ENCODE measurements at regions of chr1 and their contacts with region 1.

Region 1: GRCh38 chr1:1122078-1122811 is 6.4 kb upstream of the C1orf159 start:
- DNase-seq: peak; percentile 96
- H3K4me3 ChIP-seq: peak overlapping the region in 5 of 8 donors; percentile 10 to 54 (median 25)
- H3K27ac ChIP-seq: peak overlapping the region in 2 of 8 donors; percentile 38 to 47
- H3K4me1 ChIP-seq: peaks cover 4 to 27% (median 15%) of the 10 kb centered on the region in 6 donors
- H3K27me3 ChIP-seq: peaks cover 0 to 53% (median 11%) of the 10 kb centered on the region in 7 donors
- CTCF ChIP-seq: peak; percentile 86 to 97 (median 94)
- POLR2A ChIP-seq: no peak

Region 2: GRCh38 chr1:1058921-1059493 is 63.2 kb before region 1 on chr1:
- intact Hi-C with region 1: no loop called
- DNase-seq: peak; percentile 85
- H3K4me3 ChIP-seq: peak overlapping the region; percentile 43 to 87 (median 62)
- H3K27ac ChIP-seq: peak overlapping the region in 1 of 8 donors; percentile 29
- H3K4me1 ChIP-seq: peaks cover 12 to 45% (median 30%) of the 10 kb centered on the region in 6 donors
- H3K27me3 ChIP-seq: peaks cover 0 to 74% (median 64%) of the 10 kb centered on the region in 7 donors
- CTCF ChIP-seq: peak in 4 of 11 experiments; percentile 38 to 44 (median 41)
- POLR2A ChIP-seq: no peak

Region 3: DNA sequence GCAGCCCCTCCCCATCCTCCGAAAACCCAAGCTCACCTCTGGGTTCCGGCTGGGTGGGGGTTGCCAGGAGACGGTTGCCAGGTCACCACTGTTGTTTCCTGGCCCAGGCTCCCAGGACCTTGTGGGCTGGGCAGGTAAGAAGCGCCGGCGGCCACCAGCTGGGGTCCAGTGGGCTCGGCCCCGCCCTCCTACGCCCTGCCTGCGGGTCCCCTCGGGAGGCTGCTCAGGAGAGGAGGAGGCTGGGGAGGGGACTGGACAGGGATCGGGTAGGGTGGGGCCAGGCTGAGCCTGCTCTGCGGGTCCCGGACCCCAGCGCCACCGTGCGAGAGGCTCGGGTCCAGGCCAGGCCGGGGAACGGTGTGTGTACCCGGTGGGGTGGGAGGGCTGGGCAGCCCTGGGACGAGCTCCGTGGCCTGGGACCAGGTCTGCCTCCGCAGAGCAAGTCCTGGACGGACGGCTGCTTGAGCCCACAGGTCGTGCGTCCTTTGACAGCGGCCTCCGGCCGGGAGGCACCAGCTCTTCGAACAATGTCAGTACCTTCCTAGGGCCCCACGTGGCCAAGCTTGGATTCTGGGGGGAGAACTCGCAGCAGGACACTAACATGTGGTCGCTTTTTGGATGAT is 51.7 kb after region 1 on chr1 and contains the start of gene TTLL10:
- intact Hi-C with region 1: no loop called
- DNase-seq: peak; percentile 82
- H3K4me3 ChIP-seq: peak within 1 kb of the TSS in 1 of 8 donors; percentile 19
- H3K27ac ChIP-seq: no peak within 1 kb of the TSS
- H3K4me1 ChIP-seq: peaks cover 0 to 56% (median 38%) of the 10 kb centered on the region in 6 donors
- H3K27me3 ChIP-seq: peaks cover 0 to 100% (median 65%) of the 10 kb centered on the region in 7 donors
- CTCF ChIP-seq: no peak
- POLR2A ChIP-seq: no peak
- total RNA-seq, gene TTLL10: 0.17 to 0.34 TPM in 2 of 7 donors, not detected in the others

Region 4: DNA sequence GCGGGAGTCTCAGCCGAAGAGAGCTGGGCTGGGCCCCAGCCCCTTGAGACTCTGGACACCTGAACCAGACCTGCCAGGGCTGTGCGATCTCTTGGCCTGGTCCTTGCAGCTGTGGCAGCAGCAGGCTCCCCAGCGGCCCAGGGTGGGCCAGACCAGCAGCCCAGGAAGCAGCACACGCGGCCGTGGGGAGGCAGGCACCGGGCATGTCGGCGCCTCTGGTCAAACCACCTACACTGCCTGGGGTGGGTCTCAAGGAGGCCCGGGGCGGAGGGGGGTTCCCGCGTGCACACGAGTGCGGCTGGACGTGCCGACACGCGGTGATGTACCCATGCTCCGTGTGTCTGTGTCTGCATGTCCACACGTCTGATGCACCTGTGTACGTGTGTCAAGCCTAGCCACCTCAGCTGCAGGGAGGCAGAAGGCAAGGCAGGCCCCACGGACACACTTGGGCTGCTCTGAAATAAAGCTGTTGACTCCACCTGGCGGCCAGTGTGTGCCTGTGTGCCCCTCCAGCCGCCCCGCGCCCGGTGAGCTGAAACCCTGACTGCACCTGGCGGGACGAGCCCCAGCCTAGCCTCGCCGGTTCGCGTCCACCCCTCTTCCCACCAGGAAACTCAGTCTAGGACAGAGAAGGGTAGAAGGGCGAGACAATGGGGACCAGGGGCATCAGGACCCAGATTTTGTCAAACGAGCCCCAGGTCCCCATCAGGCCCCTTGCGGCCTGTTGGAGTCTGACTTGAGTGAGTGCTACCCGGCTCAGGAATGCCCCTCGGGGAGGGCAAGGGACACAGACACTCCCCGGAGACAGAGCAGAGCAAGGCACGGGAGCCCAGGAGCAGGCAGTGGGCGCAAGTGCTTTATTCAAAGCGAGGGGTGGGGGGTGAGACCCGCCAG is 169.6 kb after region 1 on chr1:
- intact Hi-C with region 1: loop called (anchors 2 kb)
- DNase-seq: peak; percentile 92
- H3K4me3 ChIP-seq: no peak overlapping the region
- H3K27ac ChIP-seq: no peak overlapping the region
- H3K4me1 ChIP-seq: peaks cover 0 to 22% (median 10%) of the 10 kb centered on the region in 6 donors
- H3K27me3 ChIP-seq: peaks cover 0 to 12% (median 0%) of the 10 kb centered on the region in 7 donors
- CTCF ChIP-seq: peak; percentile 63 to 85 (median 78)
- POLR2A ChIP-seq: no peak